ENCODE measurements at regions of chr4 and their contacts with region 1.

Region 1: GRCh38 chr4:113547487-113548042 is 214.0 kb downstream of the CAMK2D start:
- DNase-seq: peak; percentile 96
- H3K4me3 Mint-ChIP-seq: peak overlapping the region; percentile 17
- H3K27ac Mint-ChIP-seq: peak overlapping the region; percentile 25
- H3K4me1 Mint-ChIP-seq: peaks cover 23% of the 10 kb centered on the region
- H3K27me3 Mint-ChIP-seq: no peaks in the 10 kb centered on the region

Region 2: GRCh38 chr4:113355550-113356371 is 191.8 kb before region 1 on chr4:
- intact Hi-C with region 1: loop called (anchors 1 kb)
- DNase-seq: peak; percentile 90
- H3K4me3 Mint-ChIP-seq: peak overlapping the region; percentile 54
- H3K27ac Mint-ChIP-seq: peak overlapping the region; percentile 89
- H3K4me1 Mint-ChIP-seq: peaks cover 20% of the 10 kb centered on the region
- H3K27me3 Mint-ChIP-seq: peaks cover 42% of the 10 kb centered on the region

Region 3: DNA sequence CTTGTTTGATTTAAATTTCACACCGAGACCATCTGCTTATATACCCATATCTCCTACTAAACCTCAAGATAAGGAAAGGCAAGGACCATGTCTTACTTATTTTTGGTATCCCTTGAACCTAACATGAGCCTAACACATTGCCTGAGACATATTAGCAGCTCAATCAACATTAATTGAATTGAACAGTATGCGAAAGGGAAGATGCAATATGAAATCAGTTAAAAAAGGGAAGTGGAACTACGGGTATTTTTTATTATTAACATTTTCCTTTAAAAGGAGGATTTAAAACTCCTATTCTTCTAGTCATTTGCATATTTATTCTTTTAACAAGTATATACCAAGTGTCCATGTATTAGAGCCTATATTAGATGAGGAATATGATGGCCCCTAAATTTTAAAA is 16.9 kb after region 1 on chr4:
- intact Hi-C with region 1: loop called (anchors 1 kb)
- DNase-seq: no peak
- H3K4me3 Mint-ChIP-seq: peak overlapping the region; percentile 64
- H3K27ac Mint-ChIP-seq: no peak overlapping the region
- H3K4me1 Mint-ChIP-seq: peaks cover 40% of the 10 kb centered on the region
- H3K27me3 Mint-ChIP-seq: no peaks in the 10 kb centered on the region

Region 4: GRCh38 chr4:113574636-113575103 is 27.1 kb after region 1 on chr4:
- intact Hi-C with region 1: no loop called
- DNase-seq: no peak
- H3K4me3 Mint-ChIP-seq: no peak overlapping the region
- H3K27ac Mint-ChIP-seq: no peak overlapping the region
- H3K4me1 Mint-ChIP-seq: peaks cover 44% of the 10 kb centered on the region
- H3K27me3 Mint-ChIP-seq: no peaks in the 10 kb centered on the region

Region 5: GRCh38 chr4:113673450-113673849 is 125.9 kb after region 1 on chr4:
- intact Hi-C with region 1: loop called (anchors 2 kb)
- DNase-seq: peak; percentile 71
- H3K4me3 Mint-ChIP-seq: peak overlapping the region; percentile 12
- H3K27ac Mint-ChIP-seq: peak overlapping the region; percentile 15
- H3K4me1 Mint-ChIP-seq: peaks cover 46% of the 10 kb centered on the region
- H3K27me3 Mint-ChIP-seq: no peaks in the 10 kb centered on the region

Region 6: GRCh38 chr4:113869743-113870375 is 322.3 kb after region 1 on chr4:
- intact Hi-C with region 1: loop called (anchors 2 kb)
- DNase-seq: peak; percentile 67
- H3K4me3 Mint-ChIP-seq: no peak overlapping the region
- H3K27ac Mint-ChIP-seq: peak overlapping the region; percentile 90
- H3K4me1 Mint-ChIP-seq: peaks cover 12% of the 10 kb centered on the region
- H3K27me3 Mint-ChIP-seq: no peaks in the 10 kb centered on the region

Measured in activated CD4-positive, alpha-beta T cell treated with anti-CD3 and anti-CD28 coated beads, Interleukin-2, amount 10 ng/mL, durations not matched to agents 24 days and 14 days (primary cell).